ENCODE measurements at regions of chr6 and their contacts with region 1.

Region 1: GRCh38 chr6:16761471-16762267 is 409 bp upstream of the ATXN1 start:
- DNase-seq: peak; percentile 89
- H3K4me3 Mint-ChIP-seq: peak overlapping the region; percentile 98
- H3K27ac Mint-ChIP-seq: peak overlapping the region; percentile 92
- H3K4me1 Mint-ChIP-seq: peaks cover 59% of the 10 kb centered on the region
- H3K27me3 Mint-ChIP-seq: no peaks in the 10 kb centered on the region

Region 2: DNA sequence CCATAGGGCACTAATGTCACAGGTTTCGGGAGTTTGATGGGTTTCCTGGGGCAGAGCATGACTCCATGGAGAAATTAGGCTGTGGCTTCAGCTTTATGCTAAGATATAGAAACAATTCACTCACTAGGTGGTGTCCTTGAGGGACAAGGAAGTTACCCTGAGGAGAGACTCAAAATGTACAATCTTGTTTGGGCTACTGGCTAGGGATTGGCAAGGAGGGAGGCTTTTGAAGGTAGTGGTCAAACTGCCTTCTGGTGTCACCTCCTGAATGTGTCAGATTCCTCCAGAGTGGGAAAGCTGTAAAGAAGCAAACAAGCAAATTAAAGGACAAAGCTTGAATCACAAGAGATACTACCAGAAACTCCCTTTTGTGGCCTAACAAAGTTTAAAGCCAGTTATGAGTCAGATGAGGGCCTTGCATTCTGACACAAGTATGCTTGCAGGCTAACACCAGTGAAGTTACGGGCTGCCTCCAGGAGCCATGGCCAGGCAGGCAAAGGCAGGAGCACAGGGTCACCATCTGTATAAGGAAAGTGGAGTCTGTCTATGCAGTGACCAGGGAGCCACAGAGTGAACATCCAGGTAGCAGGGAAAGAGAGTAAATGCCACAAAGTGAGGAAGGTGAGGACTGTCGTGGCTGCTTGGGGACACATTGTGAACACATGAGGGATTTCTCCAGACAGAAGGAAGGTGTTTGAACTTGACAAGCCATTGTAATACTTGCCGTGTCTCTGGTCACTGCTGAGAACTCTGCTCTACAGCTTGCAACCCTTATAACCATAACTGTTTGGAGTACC is 991.1 kb before region 1 on chr6:
- CTCF ChIA-PET with region 1: no interaction called
- intact Hi-C with region 1: loop called (anchors 10 kb)
- DNase-seq: peak; percentile 24
- H3K4me3 Mint-ChIP-seq: no peak overlapping the region
- H3K27ac Mint-ChIP-seq: peak overlapping the region; percentile 26
- H3K4me1 Mint-ChIP-seq: peaks cover 18% of the 10 kb centered on the region
- H3K27me3 Mint-ChIP-seq: peaks cover 5% of the 10 kb centered on the region

Region 3: GRCh38 chr6:16332175-16332542 is 429.5 kb before region 1 on chr6:
- CTCF ChIA-PET with region 1: interaction called, 41 read pairs
- intact Hi-C with region 1: loop called (anchors 1 kb)
- DNase-seq: peak; percentile 94
- H3K4me3 Mint-ChIP-seq: no peak overlapping the region
- H3K27ac Mint-ChIP-seq: no peak overlapping the region
- H3K4me1 Mint-ChIP-seq: no peaks in the 10 kb centered on the region
- H3K27me3 Mint-ChIP-seq: no peaks in the 10 kb centered on the region

Region 4: GRCh38 chr6:16481697-16482399 is 279.8 kb before region 1 on chr6:
- CTCF ChIA-PET with region 1: interaction called, 3 read pairs
- intact Hi-C with region 1: loop called (anchors 1 kb)
- DNase-seq: peak; percentile 79
- H3K4me3 Mint-ChIP-seq: peak overlapping the region; percentile 32
- H3K27ac Mint-ChIP-seq: peak overlapping the region; percentile 75
- H3K4me1 Mint-ChIP-seq: peaks cover 70% of the 10 kb centered on the region
- H3K27me3 Mint-ChIP-seq: no peaks in the 10 kb centered on the region

Region 5: DNA sequence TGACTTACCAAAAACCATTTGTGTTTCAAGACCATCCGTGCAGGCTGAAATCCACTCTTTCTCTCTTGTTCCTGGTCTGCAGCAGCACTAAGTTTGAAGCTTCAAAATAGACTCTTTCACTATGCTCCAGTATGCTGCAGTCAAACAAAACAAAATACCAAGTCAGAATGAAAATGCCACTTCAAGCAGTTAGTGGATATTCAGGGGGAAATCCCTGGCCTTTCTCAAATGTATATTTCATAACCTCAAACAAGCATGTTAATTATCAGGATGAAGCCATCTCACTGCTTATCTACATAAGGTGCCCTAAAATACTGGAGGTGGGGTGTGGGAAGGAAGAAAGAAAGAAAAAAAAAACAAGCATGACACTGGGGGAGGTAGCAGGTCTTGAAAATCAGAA is 103.9 kb before region 1 on chr6:
- CTCF ChIA-PET with region 1: interaction called, 13 read pairs
- intact Hi-C with region 1: loop called (anchors 1 kb)
- DNase-seq: peak; percentile 9
- H3K4me3 Mint-ChIP-seq: peak overlapping the region; percentile 2
- H3K27ac Mint-ChIP-seq: peak overlapping the region; percentile 32
- H3K4me1 Mint-ChIP-seq: peaks cover 43% of the 10 kb centered on the region
- H3K27me3 Mint-ChIP-seq: no peaks in the 10 kb centered on the region

Region 6: GRCh38 chr6:16704401-16705045 is 57.1 kb before region 1 on chr6:
- CTCF ChIA-PET with region 1: interaction called, 11 read pairs
- intact Hi-C with region 1: loop called (anchors 1 kb)
- DNase-seq: peak; percentile 76
- H3K4me3 Mint-ChIP-seq: peak overlapping the region; percentile 46
- H3K27ac Mint-ChIP-seq: peak overlapping the region; percentile 28
- H3K4me1 Mint-ChIP-seq: peaks cover 60% of the 10 kb centered on the region
- H3K27me3 Mint-ChIP-seq: no peaks in the 10 kb centered on the region

Region 7: DNA sequence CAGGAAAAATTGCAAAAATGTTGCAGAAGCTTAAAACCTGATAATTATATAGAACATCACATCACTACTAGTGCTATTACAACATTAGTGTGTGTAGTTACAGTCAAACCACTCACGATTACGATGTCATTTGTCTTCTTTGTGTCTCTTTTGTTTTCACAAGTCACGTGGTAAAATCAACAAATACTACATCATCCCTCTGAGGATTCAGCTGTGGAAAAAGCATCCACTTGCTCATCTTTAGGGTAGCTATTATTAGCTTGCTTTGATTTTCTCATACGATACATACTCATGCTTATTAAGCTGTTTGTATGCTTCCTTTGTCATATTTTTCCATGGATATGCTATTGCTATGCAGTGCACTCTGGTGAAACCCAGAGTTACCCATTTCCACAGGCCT is 21.8 kb after region 1 on chr6:
- CTCF ChIA-PET with region 1: no interaction called
- intact Hi-C with region 1: no loop called
- DNase-seq: no peak
- H3K4me3 Mint-ChIP-seq: no peak overlapping the region
- H3K27ac Mint-ChIP-seq: no peak overlapping the region
- H3K4me1 Mint-ChIP-seq: no peaks in the 10 kb centered on the region
- H3K27me3 Mint-ChIP-seq: peaks cover 2% of the 10 kb centered on the region

Region 8: DNA sequence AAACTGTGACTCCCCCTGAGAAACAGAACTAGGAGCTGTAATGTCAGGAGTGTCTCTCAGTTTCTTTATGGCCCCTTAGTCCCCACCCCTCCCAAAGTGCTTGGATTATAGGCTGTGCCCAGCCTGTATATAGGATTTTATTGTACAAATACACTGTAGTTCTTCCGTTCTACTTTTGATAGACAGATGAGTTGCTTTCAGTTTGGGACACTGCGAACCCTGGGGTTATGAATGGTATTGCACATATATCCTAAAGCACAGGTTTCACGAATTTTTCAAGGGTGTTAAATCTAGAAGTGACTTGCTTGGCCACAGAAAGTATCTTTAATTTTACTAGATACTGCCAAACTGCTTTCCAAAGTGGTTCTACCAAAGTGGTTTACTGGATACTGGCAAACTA is 152.5 kb after region 1 on chr6:
- CTCF ChIA-PET with region 1: no interaction called
- intact Hi-C with region 1: no loop called
- DNase-seq: no peak
- H3K4me3 Mint-ChIP-seq: no peak overlapping the region
- H3K27ac Mint-ChIP-seq: no peak overlapping the region
- H3K4me1 Mint-ChIP-seq: no peaks in the 10 kb centered on the region
- H3K27me3 Mint-ChIP-seq: peaks cover 2% of the 10 kb centered on the region

Region 9: GRCh38 chr6:16964553-16965501 is 203.2 kb after region 1 on chr6:
- CTCF ChIA-PET with region 1: interaction called, 14 read pairs
- intact Hi-C with region 1: loop called (anchors 1 kb)
- DNase-seq: peak; percentile 79
- H3K4me3 Mint-ChIP-seq: no peak overlapping the region
- H3K27ac Mint-ChIP-seq: no peak overlapping the region
- H3K4me1 Mint-ChIP-seq: peaks cover 5% of the 10 kb centered on the region
- H3K27me3 Mint-ChIP-seq: peaks cover 23% of the 10 kb centered on the region